ENCODE measurements at regions of chr11 and their contacts with region 1.

Region 1: GRCh38 chr11:63916837-63917691 is at the start of gene RCOR2:
- DNase-seq: peak; percentile 87 to 91
- ATAC-seq: peak; percentile 47 to 51
- H3K4me3 ChIP-seq: peak within 1 kb of the TSS; percentile 62
- H3K27ac ChIP-seq: peak within 1 kb of the TSS; percentile 83 to 92
- H3K4me1 ChIP-seq: peaks cover 37% of the 10 kb centered on the region
- CTCF ChIP-seq: no peak
- EP300 ChIP-seq: no peak
- POLR2A ChIP-seq: peak; percentile 58
- RAD21 ChIP-seq: no peak
- polyA plus RNA-seq, gene RCOR2: 1.8 and 2.5 TPM in 2 replicates

Region 2: GRCh38 chr11:63906585-63906984 is 10.5 kb before region 1 on chr11:
- CTCF ChIA-PET with region 1: interaction called, 16 read pairs
- POLR2A ChIA-PET with region 1: no interaction called
- DNase-seq: no peak
- ATAC-seq: peak in 1 of 2 experiments; percentile 30; a peak in 3 of 6 replicates
- H3K4me3 ChIP-seq: no peak overlapping the region
- H3K27ac ChIP-seq: no peak overlapping the region
- H3K4me1 ChIP-seq: 0 out of 3 replicates have a peak, but pooled peaks cover 4% of the 10 kb centered on the region
- CTCF ChIP-seq: peak; percentile 40
- EP300 ChIP-seq: no peak
- POLR2A ChIP-seq: no peak
- RAD21 ChIP-seq: peak; percentile 17 to 42; a peak in 3 of 5 replicates

Region 3: GRCh38 chr11:63933459-63933858 is 16.4 kb after region 1 on chr11:
- CTCF ChIA-PET with region 1: interaction called, 20 read pairs
- POLR2A ChIA-PET with region 1: interaction called, 3 read pairs
- DNase-seq: no peak
- ATAC-seq: no peak
- H3K4me3 ChIP-seq: no peak overlapping the region
- H3K27ac ChIP-seq: 0 out of 6 replicates have a peak overlapping the region, but pooled peaks of 1 of the 2 experiments have one; percentile 25
- H3K4me1 ChIP-seq: peaks cover 5% of the 10 kb centered on the region
- CTCF ChIP-seq: no peak
- EP300 ChIP-seq: no peak
- POLR2A ChIP-seq: no peak
- RAD21 ChIP-seq: no peak

Region 4: GRCh38 chr11:63938479-63939396 is 21.7 kb after region 1 on chr11 and contains the start of gene NAA40:
- CTCF ChIA-PET with region 1: interaction called, 57 read pairs
- POLR2A ChIA-PET with region 1: interaction called, 3 read pairs
- DNase-seq: peak; percentile 98
- ATAC-seq: peak; percentile 97
- H3K4me3 ChIP-seq: peak within 1 kb of the TSS; percentile 82
- H3K27ac ChIP-seq: peak within 1 kb of the TSS; percentile 88 to 97
- H3K4me1 ChIP-seq: peaks cover 11% of the 10 kb centered on the region
- CTCF ChIP-seq: no peak
- EP300 ChIP-seq: no peak
- POLR2A ChIP-seq: peak; percentile 84
- RAD21 ChIP-seq: no peak
- polyA plus RNA-seq, gene NAA40: 21.9 and 23.7 TPM in 2 replicates

Region 5: GRCh38 chr11:64157631-64158394 is 240.7 kb after region 1 on chr11:
- CTCF ChIA-PET with region 1: no interaction called
- POLR2A ChIA-PET with region 1: no interaction called
- DNase-seq: no peak
- ATAC-seq: no peak
- H3K4me3 ChIP-seq: no peak overlapping the region
- H3K27ac ChIP-seq: no peak overlapping the region
- H3K4me1 ChIP-seq: no peaks in the 10 kb centered on the region
- CTCF ChIP-seq: no peak
- EP300 ChIP-seq: no peak
- POLR2A ChIP-seq: no peak
- RAD21 ChIP-seq: no peak